IMR-90 (cell line): ENCODE measurements at regions of chr1 and their contacts with region 1.

Region 1: GRCh38 chr1:169485544-169486278 is at the start of gene SLC19A2:
- DNase-seq: peak; percentile 99
- ATAC-seq: peak; percentile 98
- H3K4me3 ChIP-seq: peak within 1 kb of the TSS; percentile 75
- H3K27ac ChIP-seq: peak within 1 kb of the TSS; percentile 79
- H3K4me1 ChIP-seq: peaks cover 5% of the 10 kb centered on the region
- H3K27me3 ChIP-seq: no peaks in the 10 kb centered on the region
- CTCF ChIP-seq: peak; percentile 40
- POLR2A ChIP-seq: peak; percentile 99
- RAD21 ChIP-seq: no peak; the same call in 1 of the 2 replicates
- total RNA-seq, gene SLC19A2: 5.2 and 6.9 TPM in 2 replicates

Region 2: GRCh38 chr1:169115891-169116585 is 369.7 kb before region 1 on chr1:
- CTCF ChIA-PET with region 1: no interaction called
- POLR2A ChIA-PET with region 1: no interaction called
- dilution Hi-C with region 1: no loop called
- in situ Hi-C with region 1: loop called (anchors 10 kb)
- intact Hi-C with region 1: no loop called
- DNase-seq: peak; percentile 48
- ATAC-seq: no peak; the same call in 1 of the 2 replicates
- H3K4me3 ChIP-seq: no peak overlapping the region
- H3K27ac ChIP-seq: peak overlapping the region; percentile 2
- H3K4me1 ChIP-seq: peaks cover 39% of the 10 kb centered on the region
- H3K27me3 ChIP-seq: no peaks in the 10 kb centered on the region
- CTCF ChIP-seq: no peak
- POLR2A ChIP-seq: no peak
- RAD21 ChIP-seq: no peak

Region 3: GRCh38 chr1:169367486-169368405 is 118.0 kb before region 1 on chr1 and contains the starts of genes BLZF1 and NME7:
- CTCF ChIA-PET with region 1: no interaction called
- POLR2A ChIA-PET with region 1: no interaction called
- dilution Hi-C with region 1: no loop called
- in situ Hi-C with region 1: no loop called
- intact Hi-C with region 1: loop called (anchors 1 kb)
- DNase-seq: peak; percentile 96
- ATAC-seq: peak; percentile 99
- H3K4me3 ChIP-seq: peak within 1 kb of the TSS; percentile 48
- H3K27ac ChIP-seq: peak within 1 kb of the TSS; percentile 62
- H3K4me1 ChIP-seq: 0 out of 2 replicates have a peak, but pooled peaks cover 4% of the 10 kb centered on the region
- H3K27me3 ChIP-seq: no peaks in the 10 kb centered on the region
- CTCF ChIP-seq: no peak
- POLR2A ChIP-seq: peak; percentile 81
- RAD21 ChIP-seq: no peak
- total RNA-seq, gene BLZF1: 24.2 and 38.9 TPM in 2 replicates
- total RNA-seq, gene NME7: 18.3 and 44.4 TPM in 2 replicates

Region 4: GRCh38 chr1:169511316-169512028 is 25.8 kb after region 1 on chr1:
- CTCF ChIA-PET with region 1: interaction called, 3 read pairs
- POLR2A ChIA-PET with region 1: no interaction called
- dilution Hi-C with region 1: no loop called
- in situ Hi-C with region 1: no loop called
- intact Hi-C with region 1: loop called (anchors 1 kb)
- DNase-seq: peak; percentile 89
- ATAC-seq: peak; percentile 93
- H3K4me3 ChIP-seq: no peak overlapping the region
- H3K27ac ChIP-seq: no peak overlapping the region
- H3K4me1 ChIP-seq: no peaks in the 10 kb centered on the region
- H3K27me3 ChIP-seq: no peaks in the 10 kb centered on the region; the same call in 1 of the 2 replicates
- CTCF ChIP-seq: no peak
- POLR2A ChIP-seq: no peak
- RAD21 ChIP-seq: no peak

Region 5: GRCh38 chr1:169538998-169539871 is 53.5 kb after region 1 on chr1:
- CTCF ChIA-PET with region 1: no interaction called
- POLR2A ChIA-PET with region 1: no interaction called
- dilution Hi-C with region 1: no loop called
- in situ Hi-C with region 1: no loop called
- intact Hi-C with region 1: loop called (anchors 2 kb)
- DNase-seq: peak; percentile 83
- ATAC-seq: peak; percentile 80
- H3K4me3 ChIP-seq: no peak overlapping the region
- H3K27ac ChIP-seq: no peak overlapping the region
- H3K4me1 ChIP-seq: 0 out of 2 replicates have a peak, but pooled peaks cover 2% of the 10 kb centered on the region
- H3K27me3 ChIP-seq: peaks cover 13% of the 10 kb centered on the region
- CTCF ChIP-seq: no peak
- POLR2A ChIP-seq: no peak
- RAD21 ChIP-seq: no peak

Region 6: DNA sequence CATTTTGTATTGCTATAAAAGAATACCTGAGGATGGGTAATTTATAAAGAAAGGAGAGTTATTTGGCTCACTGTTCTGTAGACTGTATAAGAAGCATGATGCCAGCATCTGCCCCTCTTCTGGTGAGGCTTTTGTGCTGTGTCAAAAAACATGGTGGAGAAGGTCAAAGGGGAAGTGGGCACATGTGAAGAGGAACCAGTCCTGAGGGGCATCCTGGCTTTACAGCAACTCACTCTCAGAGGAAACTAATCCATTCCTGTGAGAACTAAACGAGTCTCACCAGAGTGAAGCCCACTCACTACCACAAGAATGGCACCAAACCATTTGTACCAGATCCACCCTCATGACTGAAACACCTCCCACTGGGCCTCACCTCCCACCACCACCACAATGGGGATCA is 163.0 kb after region 1 on chr1:
- CTCF ChIA-PET with region 1: no interaction called
- POLR2A ChIA-PET with region 1: no interaction called
- dilution Hi-C with region 1: no loop called
- in situ Hi-C with region 1: no loop called
- intact Hi-C with region 1: no loop called
- DNase-seq: no peak
- ATAC-seq: no peak
- H3K4me3 ChIP-seq: no peak overlapping the region
- H3K27ac ChIP-seq: no peak overlapping the region
- H3K4me1 ChIP-seq: no peaks in the 10 kb centered on the region
- H3K27me3 ChIP-seq: no peaks in the 10 kb centered on the region
- CTCF ChIP-seq: no peak
- POLR2A ChIP-seq: no peak
- RAD21 ChIP-seq: no peak

Region 7: DNA sequence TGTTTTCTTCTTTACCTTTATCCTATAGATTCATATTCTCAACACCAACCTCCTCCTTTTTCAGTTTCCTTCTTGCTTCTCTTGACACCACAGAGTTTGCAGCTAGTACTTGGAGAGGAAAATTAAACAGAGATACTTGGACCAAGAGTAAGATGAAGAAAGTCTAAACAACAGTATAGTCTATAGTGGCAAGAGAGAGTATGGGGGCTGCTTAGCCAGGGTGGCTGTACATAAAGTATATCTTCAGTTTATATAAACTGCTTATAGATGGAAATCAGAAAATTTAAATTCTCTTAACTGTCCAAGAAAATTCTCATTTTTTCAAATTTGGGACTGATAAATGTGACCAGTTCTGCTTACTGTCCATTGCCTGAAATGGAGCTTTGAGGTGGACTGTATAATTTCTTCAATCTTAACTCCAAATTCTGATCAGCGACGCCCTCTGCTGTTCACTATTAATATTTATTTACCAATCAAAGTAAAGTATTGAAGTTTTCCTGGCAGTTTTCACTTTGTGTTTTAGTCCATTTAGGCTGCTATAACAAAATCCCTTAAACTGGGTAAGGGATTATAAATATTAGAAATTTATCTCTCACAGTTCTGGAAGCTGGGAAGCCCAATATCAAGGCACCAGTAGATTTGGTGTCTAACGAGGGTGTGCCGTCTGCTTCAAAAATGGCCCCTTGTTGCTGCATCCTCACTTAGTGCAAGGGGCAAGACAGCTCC is 323.8 kb after region 1 on chr1:
- CTCF ChIA-PET with region 1: no interaction called
- POLR2A ChIA-PET with region 1: no interaction called
- dilution Hi-C with region 1: no loop called
- in situ Hi-C with region 1: loop called (anchors 5 kb)
- intact Hi-C with region 1: loop called (anchors 10 kb)
- DNase-seq: peak; percentile 35
- ATAC-seq: peak; percentile 86
- H3K4me3 ChIP-seq: no peak overlapping the region
- H3K27ac ChIP-seq: no peak overlapping the region
- H3K4me1 ChIP-seq: no peaks in the 10 kb centered on the region
- H3K27me3 ChIP-seq: no peaks in the 10 kb centered on the region
- CTCF ChIP-seq: peak; percentile 55
- POLR2A ChIP-seq: no peak
- RAD21 ChIP-seq: peak; percentile 50